ENCODE measurements at regions of chr5 and their contacts with region 1.

Region 1: DNA sequence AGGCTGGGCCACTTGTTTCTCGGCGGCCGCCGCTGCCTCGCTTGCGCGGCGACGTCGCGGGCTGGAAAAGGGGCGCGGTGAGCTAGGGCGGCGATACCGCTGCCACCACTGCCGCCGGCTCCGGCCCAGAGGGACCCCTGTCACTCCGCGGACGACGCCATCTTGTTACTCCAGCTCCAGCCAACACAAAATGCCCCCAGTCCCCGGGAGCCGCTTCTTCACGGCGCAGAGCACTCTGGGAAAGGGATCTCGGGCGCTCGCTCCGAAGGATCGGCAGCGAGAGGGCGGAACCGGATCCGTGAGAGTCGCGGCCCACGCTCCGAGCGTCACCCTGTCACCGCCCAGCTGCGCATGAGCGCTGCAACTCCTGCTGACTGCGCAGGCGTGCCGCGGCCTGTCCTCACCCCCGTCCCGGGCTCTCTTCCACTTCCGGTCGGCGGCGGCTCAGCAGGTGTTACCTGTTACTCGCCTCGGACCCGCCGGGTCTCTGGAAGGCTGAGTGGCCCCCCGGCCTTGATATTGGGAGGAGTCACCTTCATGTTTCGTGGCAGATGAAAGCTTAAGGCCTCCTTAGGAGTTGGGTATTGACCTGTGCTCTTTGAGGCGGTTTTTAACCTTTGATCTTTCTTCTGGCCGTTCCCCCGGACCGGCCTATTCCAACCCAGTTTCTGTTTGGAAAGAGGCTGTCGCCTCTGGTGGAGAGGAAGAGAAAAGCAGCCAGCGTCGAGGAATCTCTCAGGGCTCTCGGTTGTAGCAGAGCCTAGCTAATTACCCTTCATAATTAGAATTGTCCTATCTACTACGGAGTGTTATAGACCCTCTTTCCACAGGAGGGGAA is at the start of gene CSNK1A1:
- DNase-seq: peak; percentile 100
- H3K4me3 Mint-ChIP-seq: peak within 1 kb of the TSS; percentile 97
- H3K27ac Mint-ChIP-seq: peak within 1 kb of the TSS; percentile 98
- H3K4me1 Mint-ChIP-seq: peaks cover 25% of the 10 kb centered on the region
- H3K27me3 Mint-ChIP-seq: no peaks in the 10 kb centered on the region
- total RNA-seq, gene CSNK1A1: 175 TPM in 2 replicates

Region 2: GRCh38 chr5:148383564-148384379 is 1167.6 kb before region 1 on chr5 and contains the start of gene FBXO38:
- intact Hi-C with region 1: loop called (anchors 5 kb)
- DNase-seq: peak; percentile 99
- H3K4me3 Mint-ChIP-seq: peak within 1 kb of the TSS; percentile 91
- H3K27ac Mint-ChIP-seq: peak within 1 kb of the TSS; percentile 95
- H3K4me1 Mint-ChIP-seq: peaks cover 51% of the 10 kb centered on the region
- H3K27me3 Mint-ChIP-seq: no peaks in the 10 kb centered on the region
- total RNA-seq, gene FBXO38: 57.3 and 62.9 TPM in 2 replicates

Region 3: DNA sequence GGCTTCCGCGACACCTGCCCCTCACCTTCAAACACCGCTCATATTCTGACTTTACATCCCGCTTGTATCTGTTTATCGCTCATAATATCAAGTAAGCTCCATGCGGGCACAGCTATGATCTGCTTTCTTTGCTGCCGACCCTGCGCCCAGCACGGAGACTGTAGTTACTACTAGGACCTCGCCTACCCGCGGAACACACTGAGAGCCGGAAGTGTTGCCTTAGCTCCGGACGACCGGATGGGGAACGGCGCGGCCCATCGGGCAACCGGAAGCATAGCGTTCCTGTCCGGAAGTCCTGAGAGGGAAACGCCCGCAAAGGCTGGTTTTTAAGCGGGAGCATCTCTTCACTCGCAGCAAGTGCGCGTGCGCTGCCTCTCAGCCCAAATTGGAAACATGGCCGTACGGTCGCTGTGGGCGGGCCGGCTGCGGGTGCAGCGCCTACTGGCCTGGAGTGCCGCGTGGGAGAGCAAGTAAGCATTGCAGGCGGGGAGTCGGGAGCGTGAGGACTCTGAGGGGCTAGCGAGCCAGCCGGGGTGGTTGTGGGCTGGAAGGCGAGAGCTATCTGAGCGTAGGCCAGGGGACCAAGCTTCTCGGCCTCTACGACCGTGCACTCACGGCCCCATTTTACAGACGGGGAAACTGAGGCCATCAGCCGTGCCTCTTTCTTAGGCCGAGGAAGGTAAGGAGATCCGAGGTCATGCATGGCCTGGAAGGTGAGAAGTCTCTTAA is 206.1 kb before region 1 on chr5 and contains the start of gene GRPEL2:
- intact Hi-C with region 1: loop called (anchors 1 kb)
- DNase-seq: peak; percentile 97
- H3K4me3 Mint-ChIP-seq: peak within 1 kb of the TSS; percentile 96
- H3K27ac Mint-ChIP-seq: peak within 1 kb of the TSS; percentile 97
- H3K4me1 Mint-ChIP-seq: peaks cover 46% of the 10 kb centered on the region
- H3K27me3 Mint-ChIP-seq: peaks cover 1% of the 10 kb centered on the region
- total RNA-seq, gene GRPEL2: 30.6 and 30.7 TPM in 2 replicates

Region 4: DNA sequence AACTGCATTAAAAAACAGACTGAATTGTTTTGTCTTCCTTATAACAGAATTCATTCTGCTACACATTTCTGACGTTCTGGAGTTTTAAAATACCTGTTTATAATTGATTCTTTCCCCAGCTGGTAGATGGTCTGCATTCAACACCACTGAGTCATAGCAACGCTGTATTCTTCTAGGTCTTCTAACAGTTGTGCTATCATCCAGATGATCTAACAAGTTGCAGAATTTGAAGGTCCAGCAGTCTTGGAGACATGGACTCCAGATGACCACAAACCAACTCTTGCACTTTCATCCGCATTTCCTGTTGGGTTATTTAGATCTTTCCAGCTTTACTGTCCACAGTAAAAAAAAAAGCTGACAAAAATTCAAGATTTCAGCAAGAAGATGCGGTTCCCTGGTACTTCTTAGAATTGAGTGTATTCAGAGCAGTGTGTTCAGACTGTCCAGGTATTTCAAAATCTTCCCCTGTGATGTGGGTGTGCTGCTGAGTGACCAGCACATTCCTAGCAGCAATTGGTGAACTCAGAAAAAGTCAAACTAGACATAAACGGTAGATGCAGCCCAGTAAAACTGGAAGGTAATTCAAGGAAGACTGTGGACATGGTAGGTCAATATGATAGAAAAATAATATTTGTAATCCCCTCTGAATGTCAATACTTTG is 50.4 kb before region 1 on chr5:
- intact Hi-C with region 1: loop called (anchors 5 kb)
- DNase-seq: peak; percentile 13
- H3K4me3 Mint-ChIP-seq: no peak overlapping the region
- H3K27ac Mint-ChIP-seq: no peak overlapping the region
- H3K4me1 Mint-ChIP-seq: peaks cover 2% of the 10 kb centered on the region
- H3K27me3 Mint-ChIP-seq: no peaks in the 10 kb centered on the region

Region 5: GRCh38 chr5:149960272-149961185 is 409.1 kb after region 1 on chr5 and contains the start of gene SLC26A2:
- intact Hi-C with region 1: loop called (anchors 1 kb)
- DNase-seq: peak; percentile 98
- H3K4me3 Mint-ChIP-seq: peak within 1 kb of the TSS; percentile 97
- H3K27ac Mint-ChIP-seq: peak within 1 kb of the TSS; percentile 100
- H3K4me1 Mint-ChIP-seq: peaks cover 28% of the 10 kb centered on the region
- H3K27me3 Mint-ChIP-seq: no peaks in the 10 kb centered on the region
- total RNA-seq, gene SLC26A2: 8.3 and 9.0 TPM in 2 replicates

Region 6: GRCh38 chr5:151157426-151158286 is 1606.2 kb after region 1 on chr5 and contains the start of gene ANXA6:
- intact Hi-C with region 1: loop called (anchors 10 kb)
- DNase-seq: peak; percentile 92
- H3K4me3 Mint-ChIP-seq: peak within 1 kb of the TSS; percentile 98
- H3K27ac Mint-ChIP-seq: peak within 1 kb of the TSS; percentile 95
- H3K4me1 Mint-ChIP-seq: peaks cover 53% of the 10 kb centered on the region
- H3K27me3 Mint-ChIP-seq: no peaks in the 10 kb centered on the region
- total RNA-seq, gene ANXA6: 314 and 315 TPM in 2 replicates